Activated naive CD4-positive, alpha-beta T cell treated with anti-CD3 and anti-CD28 coated beads for 36 hours (primary cell): ENCODE measurements at regions of chr16 and their contacts with region 1.

Region 1: GRCh38 chr16:11361701-11362451 is 16.6 kb downstream of the RMI2 start:
- DNase-seq: peak; percentile 76
- H3K4me3 Mint-ChIP-seq: peak overlapping the region; percentile 48
- H3K27ac Mint-ChIP-seq: peak overlapping the region; percentile 21
- H3K4me1 Mint-ChIP-seq: peaks cover 52% of the 10 kb centered on the region
- H3K27me3 Mint-ChIP-seq: no peaks in the 10 kb centered on the region

Region 2: GRCh38 chr16:11268921-11269375 is 92.9 kb before region 1 on chr16 and contains the start of gene TNP2:
- CTCF ChIA-PET with region 1: no interaction called
- intact Hi-C with region 1: no loop called
- DNase-seq: no peak
- H3K4me3 Mint-ChIP-seq: no peak within 1 kb of the TSS
- H3K27ac Mint-ChIP-seq: no peak within 1 kb of the TSS
- H3K4me1 Mint-ChIP-seq: peaks cover 11% of the 10 kb centered on the region
- H3K27me3 Mint-ChIP-seq: no peaks in the 10 kb centered on the region
- total RNA-seq, gene TNP2: not detected

Region 3: GRCh38 chr16:11345040-11345862 is 16.6 kb before region 1 on chr16 and contains the start of gene RMI2:
- CTCF ChIA-PET with region 1: interaction called, 9 read pairs
- intact Hi-C with region 1: loop called (anchors 1 kb)
- DNase-seq: peak; percentile 98
- H3K4me3 Mint-ChIP-seq: peak within 1 kb of the TSS; percentile 90
- H3K27ac Mint-ChIP-seq: peak within 1 kb of the TSS; percentile 83
- H3K4me1 Mint-ChIP-seq: peaks cover 46% of the 10 kb centered on the region
- H3K27me3 Mint-ChIP-seq: no peaks in the 10 kb centered on the region
- total RNA-seq, gene RMI2: 82.8 to 86.2 TPM

Region 4: DNA sequence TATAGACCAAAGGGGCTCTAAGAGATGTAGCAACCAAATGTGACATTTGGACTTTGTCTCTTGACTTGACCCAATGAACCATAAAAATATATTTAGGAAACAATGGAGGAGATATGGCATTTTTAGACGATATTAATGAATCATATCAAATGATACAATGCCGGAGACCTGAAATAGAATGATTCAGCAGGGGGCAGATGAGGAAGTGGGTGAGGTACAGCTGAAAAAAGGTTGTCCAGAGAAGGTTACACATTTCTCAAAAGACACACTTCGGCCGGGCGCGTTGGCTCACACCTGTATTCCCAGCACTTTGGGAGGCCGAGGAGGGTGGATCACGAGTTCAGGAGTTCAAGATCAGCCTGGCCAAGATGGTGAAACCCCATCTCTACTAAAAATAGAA is 289.9 kb after region 1 on chr16:
- CTCF ChIA-PET with region 1: no interaction called
- intact Hi-C with region 1: no loop called
- DNase-seq: no peak
- H3K4me3 Mint-ChIP-seq: no peak overlapping the region
- H3K27ac Mint-ChIP-seq: no peak overlapping the region
- H3K4me1 Mint-ChIP-seq: peaks cover 11% of the 10 kb centered on the region
- H3K27me3 Mint-ChIP-seq: no peaks in the 10 kb centered on the region